ENCODE measurements at regions of chr5 and their contacts with region 1.

Region 1: DNA sequence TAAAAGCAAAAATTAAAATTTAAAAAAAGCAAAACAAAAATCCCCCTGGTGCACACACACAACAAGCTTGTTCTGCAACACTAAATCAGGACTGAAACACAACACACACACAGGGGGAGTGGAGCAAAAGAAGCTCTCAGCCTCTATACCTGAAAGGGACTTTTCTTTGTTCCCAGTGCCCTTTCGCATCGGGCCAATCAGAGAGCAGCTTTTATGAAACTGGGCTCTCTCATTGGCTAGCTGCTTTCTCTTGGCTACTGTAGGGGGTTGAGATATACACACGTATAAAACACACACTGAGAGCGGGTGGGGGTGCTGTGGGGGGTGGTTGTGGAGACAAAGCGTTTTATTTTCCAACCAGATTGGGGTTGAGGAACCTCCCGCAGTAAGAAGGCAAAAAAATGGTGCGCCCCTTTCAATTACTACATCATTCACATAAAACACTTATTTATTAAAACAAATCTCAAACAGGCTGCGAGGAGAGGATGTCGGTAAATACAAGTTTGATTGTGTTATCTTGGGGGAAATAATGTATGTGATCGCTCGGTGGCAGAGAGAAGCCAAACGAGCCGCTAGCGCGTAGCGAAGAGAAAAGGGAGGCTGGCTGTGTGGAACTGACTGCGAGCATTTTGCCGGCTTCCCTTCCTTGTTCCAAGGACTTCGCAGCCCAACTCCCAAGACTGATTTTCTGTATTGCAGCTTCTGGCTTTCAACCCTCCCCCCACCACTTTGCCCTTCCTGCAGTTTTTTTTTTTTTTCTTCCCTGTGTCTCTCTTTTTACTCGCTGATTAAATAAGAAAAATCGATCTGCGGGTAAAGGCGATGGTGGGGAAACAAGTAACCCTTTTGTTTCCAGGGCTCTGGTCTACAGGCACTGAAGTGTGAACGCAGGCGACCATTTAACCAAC is 2.5 kb upstream of the ZNF608 start:
- DNase-seq: peak; percentile 97
- H3K4me3 ChIP-seq: peak overlapping the region; percentile 65 to 89 (median 88)
- H3K27ac ChIP-seq: peak overlapping the region; percentile 98
- H3K4me1 ChIP-seq: peaks cover 20% of the 10 kb centered on the region
- H3K27me3 ChIP-seq: no peaks in the 10 kb centered on the region
- CTCF ChIP-seq: no peak
- POLR2A ChIP-seq: no peak

Region 2: DNA sequence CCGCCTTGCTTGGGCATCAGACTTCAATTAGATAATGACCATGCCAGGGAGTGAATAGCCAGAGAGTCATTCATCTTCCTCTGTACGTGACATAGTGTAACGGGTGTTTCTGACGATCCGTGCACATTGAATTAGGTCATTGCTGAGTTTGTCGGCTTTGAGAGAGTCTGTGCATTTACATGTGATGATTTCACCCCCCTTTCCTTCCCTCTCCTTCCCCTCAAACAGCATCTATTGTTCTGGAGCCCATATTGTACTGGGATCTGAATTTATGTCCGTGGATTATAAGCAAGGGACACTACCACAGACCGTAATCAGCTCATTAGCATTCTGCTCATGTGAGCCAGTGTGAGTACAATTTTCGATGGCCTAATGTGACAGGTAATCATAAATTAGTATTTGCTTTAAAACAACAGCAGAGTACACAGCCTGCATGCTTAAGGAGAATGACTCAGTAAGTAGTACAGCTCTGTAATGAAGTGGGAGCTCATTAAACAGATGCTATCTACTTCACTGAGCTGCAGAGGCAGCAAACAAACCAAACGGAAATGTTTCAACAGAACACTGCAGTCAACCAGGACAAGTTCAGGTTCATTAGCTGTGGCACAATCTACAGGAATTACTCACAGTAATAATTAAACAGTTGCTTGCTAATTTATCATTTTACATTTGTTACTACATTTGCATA is 934.9 kb before region 1 on chr5:
- CTCF ChIA-PET with region 1: no interaction called
- POLR2A ChIA-PET with region 1: no interaction called
- dilution Hi-C with region 1: no loop called
- intact Hi-C with region 1: loop called (anchors 10 kb)
- DNase-seq: peak; percentile 93
- H3K4me3 ChIP-seq: peak overlapping the region in 1 of 3 experiments; percentile 6
- H3K27ac ChIP-seq: peak overlapping the region; percentile 51
- H3K4me1 ChIP-seq: peaks cover 13% of the 10 kb centered on the region
- H3K27me3 ChIP-seq: no peaks in the 10 kb centered on the region
- CTCF ChIP-seq: no peak
- POLR2A ChIP-seq: no peak

Region 3: GRCh38 chr5:124536333-124536732 is 212.6 kb before region 1 on chr5:
- CTCF ChIA-PET with region 1: no interaction called
- POLR2A ChIA-PET with region 1: no interaction called
- dilution Hi-C with region 1: no loop called
- intact Hi-C with region 1: loop called (anchors 1 kb)
- DNase-seq: peak; percentile 91
- H3K4me3 ChIP-seq: no peak overlapping the region
- H3K27ac ChIP-seq: peak overlapping the region; percentile 63
- H3K4me1 ChIP-seq: peaks cover 28% of the 10 kb centered on the region
- H3K27me3 ChIP-seq: no peaks in the 10 kb centered on the region
- CTCF ChIP-seq: no peak
- POLR2A ChIP-seq: no peak

Region 4: GRCh38 chr5:124812754-124813358 is 63.9 kb after region 1 on chr5:
- CTCF ChIA-PET with region 1: interaction called, 4 read pairs
- POLR2A ChIA-PET with region 1: no interaction called
- dilution Hi-C with region 1: no loop called
- intact Hi-C with region 1: loop called (anchors 1 kb)
- DNase-seq: peak; percentile 82
- H3K4me3 ChIP-seq: no peak overlapping the region
- H3K27ac ChIP-seq: peak overlapping the region; percentile 81
- H3K4me1 ChIP-seq: peaks cover 10% of the 10 kb centered on the region
- H3K27me3 ChIP-seq: no peaks in the 10 kb centered on the region
- CTCF ChIP-seq: no peak
- POLR2A ChIP-seq: no peak

Region 5: GRCh38 chr5:125043781-125044391 is 294.9 kb after region 1 on chr5:
- CTCF ChIA-PET with region 1: interaction called, 3 read pairs
- POLR2A ChIA-PET with region 1: no interaction called
- dilution Hi-C with region 1: no loop called
- intact Hi-C with region 1: loop called (anchors 2 kb)
- DNase-seq: peak; percentile 82
- H3K4me3 ChIP-seq: no peak overlapping the region
- H3K27ac ChIP-seq: peak overlapping the region; percentile 10
- H3K4me1 ChIP-seq: peaks cover 34% of the 10 kb centered on the region
- H3K27me3 ChIP-seq: no peaks in the 10 kb centered on the region
- CTCF ChIP-seq: no peak
- POLR2A ChIP-seq: no peak

Region 6: GRCh38 chr5:125311743-125312142 is 562.8 kb after region 1 on chr5:
- CTCF ChIA-PET with region 1: no interaction called
- POLR2A ChIA-PET with region 1: no interaction called
- dilution Hi-C with region 1: no loop called
- intact Hi-C with region 1: loop called (anchors 5 kb)
- DNase-seq: peak; percentile 77
- H3K4me3 ChIP-seq: no peak overlapping the region
- H3K27ac ChIP-seq: peak overlapping the region; percentile 58
- H3K4me1 ChIP-seq: peaks cover 11% of the 10 kb centered on the region
- H3K27me3 ChIP-seq: no peaks in the 10 kb centered on the region
- CTCF ChIP-seq: no peak
- POLR2A ChIP-seq: no peak

Region 7: GRCh38 chr5:125659316-125660023 is 910.5 kb after region 1 on chr5:
- CTCF ChIA-PET with region 1: no interaction called
- POLR2A ChIA-PET with region 1: no interaction called
- dilution Hi-C with region 1: no loop called
- intact Hi-C with region 1: loop called (anchors 5 kb)
- DNase-seq: peak; percentile 79
- H3K4me3 ChIP-seq: peak overlapping the region in 1 of 3 experiments; percentile 21
- H3K27ac ChIP-seq: peak overlapping the region; percentile 81
- H3K4me1 ChIP-seq: peaks cover 22% of the 10 kb centered on the region
- H3K27me3 ChIP-seq: no peaks in the 10 kb centered on the region
- CTCF ChIP-seq: no peak
- POLR2A ChIP-seq: no peak